ENCODE measurements at regions of chr6 and their contacts with region 1.

Region 1: GRCh38 chr6:150426198-150426597 is 57.4 kb downstream of the IYD start:
- DNase-seq: no peak
- ATAC-seq: peak; percentile 55 to 84 (median 66)
- H3K4me3 ChIP-seq: no peak overlapping the region
- H3K27ac ChIP-seq: no peak overlapping the region
- H3K4me1 ChIP-seq: peaks cover 0 to 3% (median 0%) of the 10 kb centered on the region in 12 donors
- H3K27me3 ChIP-seq: no peaks in the 10 kb centered on the region
- CTCF ChIP-seq: no peak
- POLR2A ChIP-seq: no peak

Region 2: GRCh38 chr6:150537893-150538292 is 111.7 kb after region 1 on chr6:
- intact Hi-C with region 1: loop called in 1 of 10 experiments (anchors 5 kb)
- DNase-seq: peak in 3 of 5 donors; percentile 35 to 56 (median 54)
- ATAC-seq: peak; percentile 47 to 84 (median 65)
- H3K4me3 ChIP-seq: no peak overlapping the region
- H3K27ac ChIP-seq: peak overlapping the region in 10 of 12 donors; percentile 14 to 85 (median 50)
- H3K4me1 ChIP-seq: peaks cover 0 to 27% (median 12%) of the 10 kb centered on the region in 12 donors
- H3K27me3 ChIP-seq: no peaks in the 10 kb centered on the region
- CTCF ChIP-seq: no peak
- POLR2A ChIP-seq: no peak